Esophagus muscularis mucosa (tissue), 4 donors: ENCODE measurements at regions of chr7 and their contacts with region 1.

Region 1: DNA sequence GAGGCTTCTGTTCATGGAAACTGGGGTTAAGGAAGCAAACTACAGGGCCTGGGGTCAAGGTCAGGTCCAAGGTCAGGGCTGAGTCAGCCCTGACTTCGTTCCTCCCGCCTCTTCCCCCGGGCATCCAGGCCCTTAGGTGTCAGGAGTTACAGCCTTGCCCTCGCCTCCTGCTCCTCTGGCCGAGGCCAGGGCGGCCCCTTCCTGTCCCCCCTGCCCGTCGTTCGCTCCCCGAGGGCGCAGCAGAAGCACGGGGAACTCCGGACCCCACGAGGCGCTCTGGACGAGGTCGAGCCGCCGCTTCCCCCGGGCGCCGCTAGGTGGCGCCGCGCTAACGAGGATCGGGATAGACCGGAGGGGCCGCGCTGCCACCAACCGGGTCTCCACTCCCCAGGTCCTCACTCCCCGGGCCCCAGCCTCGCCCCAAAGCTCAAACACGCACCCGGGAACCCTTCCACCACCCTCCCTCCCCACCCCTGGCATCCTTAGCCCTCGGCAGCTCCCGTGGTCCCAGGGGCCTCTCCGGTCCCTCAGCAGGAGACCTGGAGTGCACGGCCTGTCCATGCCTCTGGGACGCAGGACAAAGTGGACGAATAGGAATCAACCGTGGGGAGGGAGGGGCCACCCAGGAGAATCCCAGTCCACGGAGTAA is 59.2 kb upstream of the MYL10 start:
- DNase-seq: peak; percentile 94
- H3K4me3 ChIP-seq: peak overlapping the region; percentile 30 to 48 (median 38)
- H3K27ac ChIP-seq: peak overlapping the region in 1 of 4 donors; percentile 24
- H3K4me1 ChIP-seq: peaks cover 10 to 14% (median 13%) of the 10 kb centered on the region in 4 donors
- H3K27me3 ChIP-seq: peaks cover 0 to 11% (median 0%) of the 10 kb centered on the region in 4 donors
- CTCF ChIP-seq: peak; percentile 90 to 99 (median 95)
- EP300 ChIP-seq: no peak
- POLR2A ChIP-seq: no peak

Region 2: GRCh38 chr7:102236592-102237287 is 548.4 kb after region 1 on chr7:
- intact Hi-C with region 1: loop called (anchors 2 kb)
- DNase-seq: no peak
- H3K4me3 ChIP-seq: no peak overlapping the region
- H3K27ac ChIP-seq: no peak overlapping the region
- H3K4me1 ChIP-seq: peaks cover 0 to 10% (median 0%) of the 10 kb centered on the region in 4 donors
- H3K27me3 ChIP-seq: no peaks in the 10 kb centered on the region
- CTCF ChIP-seq: peak; percentile 67 to 82 (median 71)
- EP300 ChIP-seq: no peak
- POLR2A ChIP-seq: no peak